Left cardiac atrium (tissue), 4 donors: ENCODE measurements at regions of chr3 and their contacts with region 1.

Region 1: DNA sequence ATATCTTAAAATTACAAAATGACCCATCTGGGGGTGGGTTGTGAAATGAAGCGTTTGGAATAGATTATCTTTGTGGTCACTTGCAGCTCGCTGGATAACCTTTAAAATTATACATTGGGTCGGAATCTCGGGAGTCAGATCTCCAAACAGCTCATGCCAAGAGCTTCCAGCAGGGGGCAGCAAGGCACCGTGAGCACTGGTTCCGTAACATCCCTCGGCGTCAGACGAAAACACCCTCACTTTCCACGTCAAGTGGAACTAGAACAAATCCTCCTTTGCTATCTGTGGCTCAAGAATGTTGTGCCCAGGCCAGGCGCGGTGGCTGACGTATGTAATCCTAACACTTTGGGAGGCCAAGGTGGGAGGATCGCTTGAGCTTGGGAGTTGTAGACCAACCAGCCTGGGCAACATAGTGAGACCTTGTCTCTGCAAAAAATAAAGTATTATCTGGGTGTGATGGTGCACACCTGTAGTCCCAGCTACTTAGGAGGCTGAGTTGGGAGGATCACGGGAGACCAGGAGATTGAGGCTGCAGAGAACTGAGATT is 31.1 kb downstream of the UMPS start:
- DNase-seq: peak; percentile 93
- ATAC-seq: peak; percentile 90 to 91

Region 2: GRCh38 chr3:124699686-124700396 is 61.5 kb before region 1 on chr3:
- intact Hi-C with region 1: no loop called
- DNase-seq: no peak
- ATAC-seq: peak in 1 of 2 donors; percentile 53

Region 3: DNA sequence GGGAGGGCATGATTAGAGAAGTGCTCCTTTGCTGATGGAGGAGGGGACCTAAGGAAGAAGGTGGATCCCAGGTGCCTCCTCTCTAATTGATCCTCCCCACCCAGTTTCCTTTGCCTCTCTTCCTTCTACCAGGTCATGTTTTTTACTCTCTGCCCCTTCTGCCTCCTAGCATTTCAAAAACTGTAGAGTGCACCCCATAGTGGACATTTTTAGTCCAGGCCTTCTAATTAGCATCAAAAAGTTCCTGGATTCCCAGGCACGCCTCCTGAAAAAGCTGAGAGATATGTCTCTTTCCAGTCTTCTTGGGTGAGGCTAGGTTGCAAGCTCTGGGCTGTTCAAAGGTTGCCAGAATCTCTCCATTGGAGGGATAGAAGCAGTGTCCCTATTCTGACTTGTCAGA is 144.5 kb after region 1 on chr3:
- intact Hi-C with region 1: loop called (anchors 1 to 2 kb)
- DNase-seq: no peak
- ATAC-seq: no peak

Region 4: DNA sequence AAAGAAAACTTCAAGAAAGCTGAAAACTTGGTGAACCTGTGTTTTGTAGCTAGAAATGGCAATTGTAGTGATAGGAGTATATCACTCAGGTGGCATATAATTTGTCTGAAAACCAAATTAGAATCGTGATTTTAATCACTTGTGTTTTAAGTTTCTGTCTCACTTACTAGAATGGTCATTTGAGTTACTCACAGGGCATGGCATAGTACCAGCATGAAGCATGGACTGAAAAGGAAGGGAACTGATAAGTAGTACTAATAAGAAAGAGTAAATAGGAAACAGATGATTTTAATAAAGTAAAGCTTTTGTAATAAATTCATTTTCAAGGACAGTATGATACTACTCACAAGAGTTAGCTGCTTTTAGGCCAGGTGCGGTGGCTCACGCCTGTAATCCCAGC is 811.9 kb after region 1 on chr3:
- intact Hi-C with region 1: no loop called
- DNase-seq: no peak
- ATAC-seq: no peak